Activated naive CD4-positive, alpha-beta T cell treated with anti-CD3 and anti-CD28 coated beads for 36 hours (primary cell): ENCODE measurements at regions of chr10 and their contacts with region 1.

Region 1: DNA sequence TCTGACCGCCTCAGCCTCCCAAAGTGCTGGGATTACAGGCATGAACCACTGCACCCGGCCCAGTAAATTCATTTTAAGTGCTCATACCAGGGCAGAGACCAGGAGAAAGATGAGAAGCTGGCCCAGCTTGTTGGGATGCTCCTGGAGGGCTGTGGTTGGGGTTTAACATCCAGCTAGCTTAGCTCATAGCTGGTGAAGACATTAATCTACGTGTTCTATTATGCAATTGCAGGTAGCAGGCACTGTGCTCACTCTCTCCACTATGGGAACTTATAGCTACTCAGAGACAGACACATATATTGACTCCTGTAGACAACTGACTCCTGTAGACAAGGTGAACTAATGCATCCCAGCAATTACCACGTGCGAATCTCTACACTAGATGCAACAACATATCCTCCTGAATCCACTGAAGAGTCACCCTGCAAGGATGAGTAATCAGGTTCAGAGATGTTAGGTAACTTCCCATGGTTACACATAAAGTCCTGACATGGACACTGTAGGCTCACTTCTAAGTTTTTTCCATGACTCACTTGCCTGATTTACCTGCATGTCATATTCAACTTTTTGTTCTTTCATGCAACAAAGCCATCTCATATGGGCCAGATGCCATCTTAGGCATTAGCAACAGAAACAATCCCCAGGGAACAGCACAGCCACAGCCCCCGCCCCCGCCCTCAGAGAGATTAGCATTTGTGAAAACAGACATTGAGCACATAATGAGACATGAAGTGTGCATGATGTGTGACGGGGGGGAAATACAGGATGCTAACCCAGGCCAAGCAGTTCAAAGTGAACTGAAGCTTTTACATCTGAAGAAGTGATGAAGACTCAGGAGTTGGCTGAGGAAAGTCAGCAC is 37.2 kb downstream of the ERLIN1 start:
- DNase-seq: peak; percentile 81
- H3K4me3 Mint-ChIP-seq: no peak overlapping the region
- H3K27ac Mint-ChIP-seq: peak overlapping the region; percentile 80
- H3K4me1 Mint-ChIP-seq: peaks cover 30% of the 10 kb centered on the region
- H3K27me3 Mint-ChIP-seq: peaks cover 3% of the 10 kb centered on the region

Region 2: GRCh38 chr10:99341860-99342490 is 806.6 kb before region 1 on chr10:
- CTCF ChIA-PET with region 1: no interaction called
- intact Hi-C with region 1: no loop called
- DNase-seq: no peak
- H3K4me3 Mint-ChIP-seq: no peak overlapping the region
- H3K27ac Mint-ChIP-seq: no peak overlapping the region
- H3K4me1 Mint-ChIP-seq: no peaks in the 10 kb centered on the region
- H3K27me3 Mint-ChIP-seq: peaks cover 7% of the 10 kb centered on the region

Region 3: GRCh38 chr10:99732033-99732912 is 416.3 kb before region 1 on chr10 and contains the starts of genes COX15 and CUTC:
- CTCF ChIA-PET with region 1: no interaction called
- intact Hi-C with region 1: loop called (anchors 1 kb)
- DNase-seq: peak; percentile 96
- H3K4me3 Mint-ChIP-seq: peak within 1 kb of the TSS; percentile 99
- H3K27ac Mint-ChIP-seq: peak within 1 kb of the TSS; percentile 96
- H3K4me1 Mint-ChIP-seq: peaks cover 32% of the 10 kb centered on the region
- H3K27me3 Mint-ChIP-seq: no peaks in the 10 kb centered on the region
- total RNA-seq, gene COX15: 36.3 to 38.8 TPM
- total RNA-seq, gene CUTC: 21.6 to 21.9 TPM

Region 4: DNA sequence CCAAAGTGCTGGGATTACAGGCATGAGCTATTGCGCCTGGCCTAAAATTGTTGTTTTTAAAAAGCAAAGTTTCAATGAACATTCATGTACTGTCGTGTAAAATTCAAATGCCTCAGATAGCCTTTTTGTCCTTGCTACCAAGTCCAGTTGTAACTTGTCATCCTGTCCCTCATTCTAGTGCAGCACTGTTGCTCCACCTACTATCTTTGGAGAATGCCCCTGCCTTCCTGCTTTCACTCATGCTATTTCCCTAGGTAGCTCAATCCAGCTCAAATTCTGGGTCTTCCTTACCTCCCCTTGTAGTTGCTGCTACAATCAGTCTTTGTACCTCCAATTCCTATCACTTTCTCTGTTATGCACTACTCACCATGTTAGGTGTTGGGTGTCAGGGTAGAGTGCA is 63.8 kb before region 1 on chr10:
- CTCF ChIA-PET with region 1: no interaction called
- intact Hi-C with region 1: no loop called
- DNase-seq: no peak
- H3K4me3 Mint-ChIP-seq: no peak overlapping the region
- H3K27ac Mint-ChIP-seq: no peak overlapping the region
- H3K4me1 Mint-ChIP-seq: no peaks in the 10 kb centered on the region
- H3K27me3 Mint-ChIP-seq: peaks cover 14% of the 10 kb centered on the region

Region 5: GRCh38 chr10:100167553-100168312 is 19.2 kb after region 1 on chr10:
- CTCF ChIA-PET with region 1: no interaction called
- intact Hi-C with region 1: loop called (anchors 1 kb)
- DNase-seq: no peak
- H3K4me3 Mint-ChIP-seq: peak overlapping the region; percentile 10
- H3K27ac Mint-ChIP-seq: peak overlapping the region; percentile 46
- H3K4me1 Mint-ChIP-seq: peaks cover 59% of the 10 kb centered on the region
- H3K27me3 Mint-ChIP-seq: no peaks in the 10 kb centered on the region

Region 6: GRCh38 chr10:100229819-100230422 is 81.3 kb after region 1 on chr10:
- CTCF ChIA-PET with region 1: no interaction called
- intact Hi-C with region 1: loop called (anchors 2 kb)
- DNase-seq: no peak
- H3K4me3 Mint-ChIP-seq: peak overlapping the region; percentile 91
- H3K27ac Mint-ChIP-seq: peak overlapping the region; percentile 90
- H3K4me1 Mint-ChIP-seq: peaks cover 31% of the 10 kb centered on the region
- H3K27me3 Mint-ChIP-seq: no peaks in the 10 kb centered on the region

Region 7: DNA sequence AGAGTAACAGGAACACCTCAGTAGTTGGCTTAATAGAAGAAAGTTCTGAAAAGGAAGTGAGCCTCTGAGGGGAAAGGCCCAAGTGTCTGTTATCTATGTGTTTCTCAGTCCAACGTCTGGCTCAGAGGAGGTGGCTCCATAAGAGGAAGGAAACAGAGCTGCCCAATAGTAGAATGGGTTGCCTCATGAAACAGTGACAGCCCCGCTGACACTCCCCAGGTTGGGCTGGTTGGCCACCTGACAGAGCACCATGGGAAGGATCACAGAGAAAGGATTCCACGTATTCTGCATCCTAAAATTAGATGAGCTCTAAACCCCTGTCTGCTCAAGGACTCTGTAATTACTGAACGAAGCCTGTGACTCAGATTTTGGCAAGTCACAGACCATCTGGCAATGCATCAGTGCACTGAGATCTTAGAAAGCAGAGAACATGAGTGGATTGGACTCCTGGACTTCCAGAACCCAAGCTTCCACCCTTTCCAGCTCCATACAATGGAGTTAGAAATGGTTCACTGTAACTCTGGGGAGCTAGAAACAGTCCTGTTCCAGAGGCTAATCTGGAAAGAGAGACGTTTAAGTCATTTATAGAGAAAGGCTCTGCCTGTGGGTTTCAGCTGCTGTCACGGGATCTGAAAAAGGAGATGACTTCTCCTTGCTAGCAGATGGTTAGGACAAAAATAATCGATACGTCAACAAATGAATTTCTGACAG is 178.6 kb after region 1 on chr10:
- CTCF ChIA-PET with region 1: no interaction called
- intact Hi-C with region 1: loop called (anchors 1 kb)
- DNase-seq: peak; percentile 82
- H3K4me3 Mint-ChIP-seq: peak overlapping the region; percentile 5
- H3K27ac Mint-ChIP-seq: peak overlapping the region; percentile 80
- H3K4me1 Mint-ChIP-seq: peaks cover 16% of the 10 kb centered on the region
- H3K27me3 Mint-ChIP-seq: peaks cover 4% of the 10 kb centered on the region